SK-N-SH (cell line): ENCODE measurements at regions of chr9 and their contacts with region 1.

Region 1: GRCh38 chr9:69056191-69056815 is 20.8 kb downstream of the FXN start:
- DNase-seq: no peak
- H3K4me3 ChIP-seq: no peak overlapping the region
- H3K27ac ChIP-seq: no peak overlapping the region
- H3K4me1 ChIP-seq: no peaks in the 10 kb centered on the region
- H3K27me3 ChIP-seq: no peaks in the 10 kb centered on the region
- CTCF ChIP-seq: no peak
- EP300 ChIP-seq: no peak
- RAD21 ChIP-seq: no peak

Region 2: GRCh38 chr9:69044240-69045219 is 11.8 kb before region 1 on chr9:
- CTCF ChIA-PET with region 1: interaction called, 14 read pairs
- POLR2A ChIA-PET with region 1: no interaction called
- DNase-seq: peak; percentile 50
- H3K4me3 ChIP-seq: no peak overlapping the region
- H3K27ac ChIP-seq: peak overlapping the region in 1 of 2 experiments; percentile 24; a peak in 2 of 4 replicates
- H3K4me1 ChIP-seq: peaks cover 7 to 9% of the 10 kb centered on the region in 2 experiments; a peak in 2 of 4 replicates
- H3K27me3 ChIP-seq: no peaks in the 10 kb centered on the region
- CTCF ChIP-seq: no peak
- EP300 ChIP-seq: no peak
- RAD21 ChIP-seq: no peak

Region 3: DNA sequence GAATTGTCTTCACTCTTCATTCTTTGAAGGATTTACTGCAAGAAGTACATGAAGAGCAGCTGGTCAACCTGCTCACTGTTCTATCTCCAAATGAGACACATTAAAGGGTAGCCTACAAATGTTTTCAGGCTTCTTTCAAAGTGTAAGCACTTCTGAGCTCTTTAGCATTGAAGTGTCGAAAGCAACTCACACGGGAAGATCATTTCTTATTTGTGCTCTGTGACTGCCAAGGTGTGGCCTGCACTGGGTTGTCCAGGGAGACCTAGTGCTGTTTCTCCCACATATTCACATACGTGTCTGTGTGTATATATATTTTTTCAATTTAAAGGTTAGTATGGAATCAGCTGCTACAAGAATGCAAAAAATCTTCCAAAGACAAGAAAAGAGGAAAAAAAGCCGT is 16.8 kb after region 1 on chr9:
- CTCF ChIA-PET with region 1: interaction called, 10 read pairs
- POLR2A ChIA-PET with region 1: no interaction called
- DNase-seq: no peak
- H3K4me3 ChIP-seq: no peak overlapping the region
- H3K27ac ChIP-seq: no peak overlapping the region
- H3K4me1 ChIP-seq: no peaks in the 10 kb centered on the region
- H3K27me3 ChIP-seq: no peaks in the 10 kb centered on the region
- CTCF ChIP-seq: no peak
- EP300 ChIP-seq: no peak
- RAD21 ChIP-seq: no peak

Region 4: GRCh38 chr9:69180670-69181069 is 124.4 kb after region 1 on chr9:
- CTCF ChIA-PET with region 1: interaction called, 32 read pairs
- POLR2A ChIA-PET with region 1: no interaction called
- DNase-seq: peak; percentile 74
- H3K4me3 ChIP-seq: peak overlapping the region in 1 of 2 experiments; percentile 20; a peak in 1 of 4 replicates
- H3K27ac ChIP-seq: peak overlapping the region; percentile 78 to 90; a peak in 3 of 4 replicates
- H3K4me1 ChIP-seq: peaks cover 7 to 45% of the 10 kb centered on the region in 2 experiments
- H3K27me3 ChIP-seq: no peaks in the 10 kb centered on the region
- CTCF ChIP-seq: no peak
- EP300 ChIP-seq: peak; percentile 43 to 91
- RAD21 ChIP-seq: no peak

Region 5: GRCh38 chr9:69186841-69187611 is 130.7 kb after region 1 on chr9:
- CTCF ChIA-PET with region 1: interaction called, 241 read pairs
- POLR2A ChIA-PET with region 1: no interaction called
- DNase-seq: no peak
- H3K4me3 ChIP-seq: no peak overlapping the region
- H3K27ac ChIP-seq: peak overlapping the region; percentile 18 to 50; a peak in 3 of 4 replicates
- H3K4me1 ChIP-seq: peaks cover 3 to 16% of the 10 kb centered on the region in 2 experiments; a peak in 3 of 4 replicates
- H3K27me3 ChIP-seq: no peaks in the 10 kb centered on the region
- CTCF ChIP-seq: no peak
- EP300 ChIP-seq: no peak
- RAD21 ChIP-seq: no peak

Region 6: GRCh38 chr9:69199769-69200470 is 143.6 kb after region 1 on chr9:
- CTCF ChIA-PET with region 1: interaction called, 241 read pairs
- POLR2A ChIA-PET with region 1: no interaction called
- DNase-seq: no peak
- H3K4me3 ChIP-seq: no peak overlapping the region
- H3K27ac ChIP-seq: no peak overlapping the region
- H3K4me1 ChIP-seq: no peaks in the 10 kb centered on the region
- H3K27me3 ChIP-seq: no peaks in the 10 kb centered on the region
- CTCF ChIP-seq: no peak
- EP300 ChIP-seq: no peak
- RAD21 ChIP-seq: no peak